AG04449 (cell line): ENCODE measurements at regions of chr10 and their contacts with region 1.

Region 1: DNA sequence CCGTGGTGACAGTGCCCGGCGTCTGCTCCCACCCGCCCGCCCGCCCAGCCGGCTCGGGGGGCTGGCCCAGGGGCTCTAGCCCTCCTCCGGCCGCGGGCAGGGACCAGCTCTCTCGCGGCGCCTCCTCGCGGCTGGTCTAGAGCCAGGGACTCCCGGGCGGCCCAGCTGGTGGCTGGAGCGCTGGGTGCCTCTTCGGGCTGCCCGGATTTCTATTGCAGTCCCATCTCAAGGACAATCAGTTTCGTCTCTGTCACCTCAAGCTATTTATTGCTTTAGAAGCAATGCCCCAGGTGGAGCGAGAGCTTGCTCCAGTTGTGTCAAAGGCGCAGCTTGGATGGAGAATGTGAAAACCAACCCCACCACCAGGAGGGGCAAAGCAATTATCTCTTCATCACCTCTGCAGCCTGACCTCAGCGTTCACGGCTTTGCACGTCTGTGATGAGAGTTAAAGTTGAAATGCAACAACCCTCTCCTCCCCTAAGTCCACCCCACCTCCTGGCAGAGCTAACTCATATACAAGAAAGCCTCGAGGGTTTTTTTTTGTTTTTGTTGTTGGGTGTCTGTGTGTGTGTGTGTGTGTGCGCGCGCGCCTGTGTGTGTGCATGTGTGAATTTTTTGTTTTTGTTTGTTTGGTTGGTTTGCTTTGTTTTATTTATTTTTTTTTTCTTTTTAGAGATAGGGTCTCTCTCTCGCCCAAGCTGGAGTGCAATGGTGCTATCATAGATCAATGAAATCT is at the start of gene ITGA8:
- DNase-seq: no peak
- H3K4me3 ChIP-seq: peak within 1 kb of the TSS; percentile 55
- CTCF ChIP-seq: peak; percentile 69

Region 2: GRCh38 chr10:15461353-15462108 is 258.5 kb before region 1 on chr10:
- CTCF ChIA-PET with region 1: interaction called, 51 read pairs
- POLR2A ChIA-PET with region 1: interaction called, 3 read pairs
- DNase-seq: no peak
- H3K4me3 ChIP-seq: no peak overlapping the region
- CTCF ChIP-seq: peak; percentile 60

Region 3: DNA sequence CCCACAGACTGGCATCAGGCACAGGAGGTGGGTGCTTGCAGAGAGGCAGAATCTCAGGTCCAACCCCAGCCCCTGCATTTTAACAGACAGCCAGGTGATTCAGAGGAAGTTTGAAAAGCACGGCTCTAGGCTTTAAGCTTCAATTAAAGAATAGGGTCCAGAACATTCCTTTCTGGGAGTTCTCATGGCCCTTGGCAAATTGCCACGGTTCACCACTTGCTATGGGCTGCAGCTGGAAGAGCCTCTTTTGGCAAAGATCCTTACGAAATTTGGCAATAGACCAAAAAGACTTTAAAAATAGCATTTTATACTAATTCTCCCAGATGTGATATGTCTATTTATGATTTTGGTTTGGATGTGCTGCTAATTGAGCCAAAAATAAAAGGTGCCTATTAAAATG is 148.5 kb before region 1 on chr10:
- CTCF ChIA-PET with region 1: interaction called, 12 read pairs
- POLR2A ChIA-PET with region 1: no interaction called
- DNase-seq: peak; percentile 7
- H3K4me3 ChIP-seq: no peak overlapping the region
- CTCF ChIP-seq: no peak

Region 4: DNA sequence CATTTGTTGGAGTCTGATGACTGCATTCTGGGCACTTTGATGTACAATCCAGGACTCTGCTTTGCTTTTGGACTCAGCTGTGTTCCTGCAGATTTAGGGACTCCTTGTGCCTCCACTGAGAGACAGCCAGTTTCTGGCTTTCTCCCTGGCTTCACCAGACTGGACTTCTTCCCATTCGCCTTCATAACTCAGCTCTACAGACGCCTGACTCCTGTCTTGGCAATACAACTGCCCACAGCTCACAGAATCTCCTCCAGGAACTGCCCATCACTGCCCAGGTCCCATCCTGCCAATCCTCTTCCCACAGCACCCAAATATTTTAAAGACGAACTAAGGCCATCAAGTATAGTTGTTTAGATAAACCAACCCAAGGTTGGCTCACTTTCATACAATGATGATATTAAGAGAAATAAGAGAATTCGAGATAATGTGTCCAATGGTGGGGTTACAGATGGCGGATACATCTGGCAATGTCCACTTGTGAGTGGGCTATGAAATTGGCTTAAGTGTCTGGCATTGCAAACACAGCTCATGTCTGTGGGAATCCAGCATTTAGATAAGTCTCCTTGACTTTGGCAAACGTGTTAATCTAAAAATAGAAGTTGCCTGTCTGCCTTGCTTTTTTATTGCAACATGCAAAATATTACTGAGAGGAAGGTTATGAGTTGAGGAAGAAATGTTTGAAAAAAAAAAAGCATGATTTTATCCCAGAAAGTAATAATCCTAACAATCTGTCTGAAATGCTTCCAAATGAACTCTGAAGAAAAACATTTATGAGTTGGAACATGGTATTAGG is 95.5 kb before region 1 on chr10:
- CTCF ChIA-PET with region 1: no interaction called
- POLR2A ChIA-PET with region 1: no interaction called
- DNase-seq: peak; percentile 60
- H3K4me3 ChIP-seq: no peak overlapping the region
- CTCF ChIP-seq: no peak

Region 5: DNA sequence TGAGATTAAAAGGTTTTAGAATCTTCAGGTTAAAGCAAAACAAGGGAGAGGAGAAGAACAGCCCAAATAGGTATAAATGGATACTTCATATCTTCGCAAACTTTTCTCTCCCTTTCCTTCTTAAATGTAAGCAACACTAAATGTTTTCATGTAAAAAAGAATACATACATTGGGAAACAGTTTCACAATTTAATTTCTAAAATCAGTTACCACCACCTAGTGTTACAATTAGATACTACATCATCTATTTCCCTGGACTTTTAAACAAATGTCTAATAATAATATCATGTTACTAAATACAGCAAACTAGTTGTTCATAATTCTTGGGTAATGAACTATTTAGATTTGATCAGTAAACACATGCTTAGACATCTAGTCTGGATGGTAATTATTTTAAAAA is 104.4 kb after region 1 on chr10:
- CTCF ChIA-PET with region 1: interaction called, 11 read pairs
- POLR2A ChIA-PET with region 1: no interaction called
- DNase-seq: no peak
- H3K4me3 ChIP-seq: no peak overlapping the region
- CTCF ChIP-seq: peak; percentile 11